ENCODE measurements at regions of chr1 and their contacts with region 1.

Region 1: GRCh38 chr1:36576118-36576517 is 93.4 kb upstream of the CSF3R start:
- DNase-seq: peak; percentile 80
- ATAC-seq: peak; percentile 50

Region 2: GRCh38 chr1:35915693-35916092 is 660.4 kb before region 1 on chr1:
- intact Hi-C with region 1: no loop called
- DNase-seq: no peak
- ATAC-seq: no peak

Region 3: DNA sequence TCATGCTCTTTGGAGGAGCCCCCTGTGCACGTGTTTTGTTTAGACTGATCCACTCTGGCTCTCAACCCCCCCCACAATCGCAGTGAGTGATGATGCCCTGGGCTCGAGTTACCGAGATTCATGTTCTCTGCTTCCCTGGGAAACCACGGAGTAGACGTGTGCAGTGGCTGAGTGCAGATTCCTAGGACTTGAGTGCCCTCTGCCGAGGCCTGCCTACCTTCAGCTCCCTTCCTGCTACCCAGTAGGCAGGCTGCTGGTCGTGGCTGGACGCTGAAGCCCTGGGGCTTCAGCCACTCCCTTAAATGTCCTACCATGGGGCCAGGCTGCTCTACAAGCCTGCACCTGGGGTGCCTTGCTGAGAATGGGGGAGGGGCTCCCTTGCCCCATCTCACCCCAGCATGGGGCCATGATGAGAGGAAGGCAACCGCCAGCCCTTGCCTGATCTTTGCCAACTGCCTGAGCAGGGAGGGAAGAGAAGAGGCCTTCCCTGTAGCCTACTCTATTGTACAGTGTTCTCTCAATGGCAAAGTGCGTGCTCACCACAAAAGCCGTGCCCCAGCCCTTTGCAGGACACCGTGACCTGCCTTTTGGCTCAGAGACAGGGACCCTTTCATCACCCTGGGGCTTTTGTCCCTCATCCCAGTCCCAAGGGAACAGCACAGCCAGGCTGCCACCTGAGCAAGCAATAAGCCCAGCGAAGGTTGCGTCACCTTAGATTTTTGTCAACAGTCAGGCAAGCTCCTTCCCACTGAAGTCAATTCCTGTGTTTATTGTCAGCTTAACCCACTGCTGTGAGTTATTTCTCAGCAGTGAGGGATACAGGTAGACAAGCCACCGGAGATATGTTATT is 462.3 kb after region 1 on chr1:
- intact Hi-C with region 1: loop called (anchors 10 kb)
- DNase-seq: no peak
- ATAC-seq: peak; percentile 69

Region 4: DNA sequence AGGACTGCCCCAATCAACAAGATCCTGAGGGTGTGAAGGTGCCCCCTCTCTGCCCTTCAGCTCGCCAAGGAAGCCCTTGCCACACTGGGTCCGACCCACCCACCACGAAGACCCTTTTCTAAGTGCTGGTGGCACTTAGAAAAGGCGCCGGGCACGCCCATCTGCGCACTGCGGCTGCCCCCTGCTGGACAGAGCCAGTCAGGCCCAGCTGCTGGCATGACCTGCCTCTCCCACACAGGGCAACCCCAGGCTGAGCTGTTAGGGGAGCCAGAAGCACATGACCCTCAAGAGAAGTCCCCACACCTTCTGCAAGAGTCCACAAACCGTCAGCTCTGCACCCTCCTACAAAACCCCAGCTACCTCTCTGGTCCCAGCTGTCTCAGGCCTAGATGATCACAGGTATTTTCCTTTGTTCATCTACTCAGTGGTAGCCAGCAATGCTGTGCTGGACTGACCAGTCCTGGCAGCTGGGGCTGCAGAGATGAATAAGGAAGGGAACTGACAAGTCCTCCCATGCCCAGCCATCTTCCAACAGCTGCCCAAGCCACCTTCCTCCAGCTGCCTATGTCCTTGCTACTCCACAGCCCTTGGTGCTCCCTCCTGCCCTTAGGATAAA is 858.3 kb after region 1 on chr1:
- intact Hi-C with region 1: loop called (anchors 5 kb)
- DNase-seq: peak; percentile 87
- ATAC-seq: peak; percentile 63

Measured in Right ventricle myocardium inferior (tissue), 1 donor.